ENCODE measurements at regions of chr15 and their contacts with region 1.

Region 1: GRCh38 chr15:45457641-45458433 is 64.7 kb downstream of the SLC30A4 start:
- DNase-seq: peak; percentile 51 to 91 (median 68)
- ATAC-seq: peak; percentile 65
- H3K4me3 ChIP-seq: peak overlapping the region; percentile 58
- H3K4me3 Mint-ChIP-seq: peak overlapping the region; percentile 89
- H3K27ac ChIP-seq: peak overlapping the region; percentile 38 to 51
- H3K27ac Mint-ChIP-seq: peak overlapping the region; percentile 83
- H3K4me1 ChIP-seq: peaks cover 45% of the 10 kb centered on the region
- H3K4me1 Mint-ChIP-seq: peaks cover 49% of the 10 kb centered on the region
- H3K27me3 ChIP-seq: no peaks in the 10 kb centered on the region
- H3K27me3 Mint-ChIP-seq: no peaks in the 10 kb centered on the region
- CTCF ChIP-seq: peak; percentile 98

Region 2: GRCh38 chr15:45307230-45307924 is 150.5 kb before region 1 on chr15:
- CTCF ChIA-PET with region 1: no interaction called
- POLR2A ChIA-PET with region 1: no interaction called
- intact Hi-C with region 1: loop called in 1 of 2 experiments (anchors 5 kb)
- DNase-seq: peak in 3 of 14 experiments; percentile 22 to 28 (median 23)
- ATAC-seq: no peak
- H3K4me3 ChIP-seq: no peak overlapping the region
- H3K4me3 Mint-ChIP-seq: peak overlapping the region; percentile 77
- H3K27ac ChIP-seq: no peak overlapping the region
- H3K27ac Mint-ChIP-seq: no peak overlapping the region
- H3K4me1 ChIP-seq: no peaks in the 10 kb centered on the region
- H3K4me1 Mint-ChIP-seq: peaks cover 6% of the 10 kb centered on the region
- H3K27me3 ChIP-seq: peaks cover 8 to 13% of the 10 kb centered on the region in 2 experiments
- H3K27me3 Mint-ChIP-seq: peaks cover 47% of the 10 kb centered on the region
- CTCF ChIP-seq: peak; percentile 44

Region 3: GRCh38 chr15:45414215-45414885 is 43.5 kb before region 1 on chr15:
- CTCF ChIA-PET with region 1: interaction called, 16 read pairs
- POLR2A ChIA-PET with region 1: no interaction called
- intact Hi-C with region 1: loop called in 1 of 2 experiments (anchors 10 kb)
- DNase-seq: peak in 1 of 14 experiments; percentile 24
- ATAC-seq: no peak
- H3K4me3 ChIP-seq: no peak overlapping the region
- H3K4me3 Mint-ChIP-seq: no peak overlapping the region
- H3K27ac ChIP-seq: no peak overlapping the region
- H3K27ac Mint-ChIP-seq: peak overlapping the region; percentile 10
- H3K4me1 ChIP-seq: peaks cover 12% of the 10 kb centered on the region
- H3K4me1 Mint-ChIP-seq: peaks cover 29% of the 10 kb centered on the region
- H3K27me3 ChIP-seq: no peaks in the 10 kb centered on the region
- H3K27me3 Mint-ChIP-seq: no peaks in the 10 kb centered on the region
- CTCF ChIP-seq: no peak

Region 4: DNA sequence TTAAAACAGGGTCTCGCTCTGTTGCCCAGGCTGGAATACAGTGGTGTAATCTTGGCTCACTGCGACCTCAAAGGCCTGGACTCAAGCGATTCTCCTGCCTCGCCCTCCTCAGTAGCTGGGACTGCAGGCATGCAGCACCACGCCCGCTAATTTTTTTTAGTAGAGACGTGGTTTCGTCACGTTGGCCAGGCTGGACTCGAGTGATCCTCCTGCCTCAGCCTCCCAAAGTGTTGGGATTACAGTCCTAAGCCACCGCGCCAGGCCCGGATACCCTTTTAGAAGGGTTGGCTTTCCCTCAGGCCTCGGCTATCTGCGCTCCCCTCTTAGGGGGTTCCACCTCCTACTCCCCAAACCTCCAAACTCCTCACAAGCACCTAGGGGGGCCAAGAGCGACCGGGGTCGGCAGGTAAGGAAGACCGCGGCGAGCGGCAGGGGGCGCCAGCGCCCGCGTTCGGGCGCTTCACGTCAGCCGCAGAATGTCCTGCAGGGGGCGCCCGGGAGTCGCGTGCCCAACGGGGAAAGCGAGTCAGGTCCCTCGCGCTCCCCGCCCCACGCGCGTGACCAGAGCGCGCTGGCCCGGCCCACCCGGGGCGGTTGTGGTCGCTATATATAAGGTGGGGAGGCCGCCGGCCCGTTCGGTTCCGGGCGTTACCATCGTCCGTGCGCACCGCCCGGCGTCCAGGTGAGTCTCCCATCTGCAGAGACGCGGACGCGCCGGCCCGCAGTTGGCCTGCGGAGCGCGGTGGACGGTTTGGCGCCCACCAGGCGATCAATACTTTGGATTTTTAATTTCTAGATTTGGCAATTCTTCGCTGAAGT is 27.7 kb before region 1 on chr15:
- CTCF ChIA-PET with region 1: interaction called, 22 read pairs
- POLR2A ChIA-PET with region 1: interaction called, 3 read pairs
- intact Hi-C with region 1: loop called (anchors 1 kb)
- DNase-seq: peak; percentile 74 to 94 (median 84)
- ATAC-seq: peak; percentile 95
- H3K4me3 ChIP-seq: peak overlapping the region; percentile 45
- H3K4me3 Mint-ChIP-seq: no peak overlapping the region
- H3K27ac ChIP-seq: no peak overlapping the region
- H3K27ac Mint-ChIP-seq: no peak overlapping the region
- H3K4me1 ChIP-seq: peaks cover 10% of the 10 kb centered on the region
- H3K4me1 Mint-ChIP-seq: no peaks in the 10 kb centered on the region
- H3K27me3 ChIP-seq: peaks cover 0 to 6% of the 10 kb centered on the region in 2 experiments
- H3K27me3 Mint-ChIP-seq: peaks cover 3% of the 10 kb centered on the region
- CTCF ChIP-seq: peak; percentile 100

Region 5: GRCh38 chr15:45439521-45440260 is 18.1 kb before region 1 on chr15:
- CTCF ChIA-PET with region 1: interaction called, 10 read pairs
- POLR2A ChIA-PET with region 1: no interaction called
- intact Hi-C with region 1: no loop called
- DNase-seq: no peak
- ATAC-seq: no peak
- H3K4me3 ChIP-seq: no peak overlapping the region
- H3K4me3 Mint-ChIP-seq: no peak overlapping the region
- H3K27ac ChIP-seq: no peak overlapping the region
- H3K27ac Mint-ChIP-seq: no peak overlapping the region
- H3K4me1 ChIP-seq: no peaks in the 10 kb centered on the region
- H3K4me1 Mint-ChIP-seq: no peaks in the 10 kb centered on the region
- H3K27me3 ChIP-seq: no peaks in the 10 kb centered on the region
- H3K27me3 Mint-ChIP-seq: no peaks in the 10 kb centered on the region
- CTCF ChIP-seq: no peak

Region 6: DNA sequence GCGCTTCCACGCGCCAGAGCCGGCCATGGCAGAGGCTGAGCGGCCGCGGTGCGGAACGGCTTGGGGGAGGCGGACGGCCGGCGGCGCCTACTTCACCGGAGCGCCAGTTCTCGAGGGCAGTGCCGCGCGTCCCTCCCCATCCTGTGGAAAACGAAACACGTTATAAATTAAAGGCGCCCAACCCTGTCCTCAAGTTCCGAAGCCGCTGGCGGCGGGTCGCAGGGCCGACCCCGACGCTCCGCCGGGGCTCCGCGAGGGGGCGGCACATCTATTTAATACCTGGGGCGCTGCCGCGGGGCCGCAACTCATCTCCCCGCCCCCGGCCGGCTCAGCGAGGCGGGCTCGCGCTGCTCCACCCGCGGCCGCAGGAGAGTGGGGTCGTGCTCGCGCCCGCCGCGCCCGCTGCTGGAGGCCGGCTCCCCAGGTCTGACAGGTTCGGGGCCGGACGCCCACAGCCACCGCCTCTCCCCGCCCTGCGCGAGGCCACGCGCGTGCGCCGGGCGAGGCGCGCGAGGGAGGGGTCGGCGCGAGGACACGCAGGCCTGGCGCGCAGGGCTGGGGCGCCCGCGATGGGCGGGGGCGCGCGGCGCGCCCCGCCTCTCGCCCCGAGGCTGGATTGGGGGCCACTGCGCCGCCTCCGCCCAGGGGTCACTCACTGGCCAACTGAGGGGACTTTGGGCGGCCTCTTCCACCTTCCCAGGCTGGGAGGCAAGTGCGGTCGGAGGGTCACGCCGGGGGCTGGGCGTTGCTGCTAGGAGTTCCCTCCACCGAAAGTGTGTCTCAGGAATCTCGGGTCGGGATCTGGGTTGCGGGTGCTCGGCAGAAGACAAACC is 64.7 kb after region 1 on chr15 and contains the start of gene SLC30A4:
- CTCF ChIA-PET with region 1: no interaction called
- POLR2A ChIA-PET with region 1: no interaction called
- intact Hi-C with region 1: loop called (anchors 5 kb)
- DNase-seq: peak; percentile 31 to 87 (median 54)
- ATAC-seq: peak; percentile 86
- H3K4me3 ChIP-seq: peak within 1 kb of the TSS; percentile 87
- H3K4me3 Mint-ChIP-seq: peak within 1 kb of the TSS; percentile 97
- H3K27ac ChIP-seq: no peak within 1 kb of the TSS
- H3K27ac Mint-ChIP-seq: peak within 1 kb of the TSS; percentile 73
- H3K4me1 ChIP-seq: peaks cover 19% of the 10 kb centered on the region
- H3K4me1 Mint-ChIP-seq: peaks cover 18% of the 10 kb centered on the region
- H3K27me3 ChIP-seq: no peaks in the 10 kb centered on the region
- H3K27me3 Mint-ChIP-seq: no peaks in the 10 kb centered on the region
- CTCF ChIP-seq: peak; percentile 54
- total RNA-seq, gene SLC30A4: 2.1 to 2.3 TPM

Region 7: DNA sequence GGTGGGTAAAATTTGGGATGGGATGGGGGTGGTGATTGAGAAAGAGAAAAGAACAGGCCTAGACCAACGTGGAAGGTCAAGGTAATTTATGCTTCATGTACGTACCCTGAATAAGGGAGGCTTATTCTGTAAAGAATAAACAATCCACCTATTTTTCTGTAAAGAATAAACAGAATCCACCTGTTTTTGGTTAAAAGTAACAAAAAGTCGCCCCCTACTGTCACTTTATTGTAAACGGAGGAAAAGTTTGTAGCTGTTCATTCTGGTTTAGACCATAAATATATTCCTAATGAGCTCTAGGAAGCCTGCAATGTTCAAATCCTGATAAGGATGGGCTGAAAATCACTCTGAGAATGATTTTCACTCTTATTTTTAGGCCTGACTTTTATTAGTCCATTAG is 153.5 kb after region 1 on chr15:
- CTCF ChIA-PET with region 1: interaction called, 7 read pairs
- POLR2A ChIA-PET with region 1: no interaction called
- intact Hi-C with region 1: loop called (anchors 1 kb)
- DNase-seq: peak in 3 of 14 experiments; percentile 30 to 37 (median 33)
- ATAC-seq: no peak
- H3K4me3 ChIP-seq: no peak overlapping the region
- H3K4me3 Mint-ChIP-seq: no peak overlapping the region
- H3K27ac ChIP-seq: no peak overlapping the region
- H3K27ac Mint-ChIP-seq: no peak overlapping the region
- H3K4me1 ChIP-seq: no peaks in the 10 kb centered on the region
- H3K4me1 Mint-ChIP-seq: no peaks in the 10 kb centered on the region
- H3K27me3 ChIP-seq: no peaks in the 10 kb centered on the region
- H3K27me3 Mint-ChIP-seq: no peaks in the 10 kb centered on the region
- CTCF ChIP-seq: peak; percentile 50

Region 8: GRCh38 chr15:46091860-46092450 is 634.1 kb after region 1 on chr15:
- CTCF ChIA-PET with region 1: no interaction called
- POLR2A ChIA-PET with region 1: no interaction called
- intact Hi-C with region 1: no loop called
- DNase-seq: no peak
- ATAC-seq: no peak
- H3K4me3 ChIP-seq: no peak overlapping the region
- H3K4me3 Mint-ChIP-seq: no peak overlapping the region
- H3K27ac ChIP-seq: no peak overlapping the region
- H3K27ac Mint-ChIP-seq: no peak overlapping the region
- H3K4me1 ChIP-seq: no peaks in the 10 kb centered on the region
- H3K4me1 Mint-ChIP-seq: no peaks in the 10 kb centered on the region
- H3K27me3 ChIP-seq: no peaks in the 10 kb centered on the region
- H3K27me3 Mint-ChIP-seq: no peaks in the 10 kb centered on the region
- CTCF ChIP-seq: no peak

Measured in CD4-positive, alpha-beta T cell (primary cell).